Activated CD4-positive, alpha-beta memory T cell treated with anti-CD3 and anti-CD28 coated beads for 36 hours (primary cell): ENCODE measurements at regions of chr4 and their contacts with region 1.

Region 1: GRCh38 chr4:98601708-98602107 is 56.7 kb downstream of the TSPAN5 start:
- DNase-seq: peak; percentile 54
- H3K4me3 Mint-ChIP-seq: peak overlapping the region; percentile 54
- H3K27ac Mint-ChIP-seq: peak overlapping the region; percentile 82
- H3K4me1 Mint-ChIP-seq: peaks cover 55% of the 10 kb centered on the region
- H3K27me3 Mint-ChIP-seq: no peaks in the 10 kb centered on the region

Region 2: DNA sequence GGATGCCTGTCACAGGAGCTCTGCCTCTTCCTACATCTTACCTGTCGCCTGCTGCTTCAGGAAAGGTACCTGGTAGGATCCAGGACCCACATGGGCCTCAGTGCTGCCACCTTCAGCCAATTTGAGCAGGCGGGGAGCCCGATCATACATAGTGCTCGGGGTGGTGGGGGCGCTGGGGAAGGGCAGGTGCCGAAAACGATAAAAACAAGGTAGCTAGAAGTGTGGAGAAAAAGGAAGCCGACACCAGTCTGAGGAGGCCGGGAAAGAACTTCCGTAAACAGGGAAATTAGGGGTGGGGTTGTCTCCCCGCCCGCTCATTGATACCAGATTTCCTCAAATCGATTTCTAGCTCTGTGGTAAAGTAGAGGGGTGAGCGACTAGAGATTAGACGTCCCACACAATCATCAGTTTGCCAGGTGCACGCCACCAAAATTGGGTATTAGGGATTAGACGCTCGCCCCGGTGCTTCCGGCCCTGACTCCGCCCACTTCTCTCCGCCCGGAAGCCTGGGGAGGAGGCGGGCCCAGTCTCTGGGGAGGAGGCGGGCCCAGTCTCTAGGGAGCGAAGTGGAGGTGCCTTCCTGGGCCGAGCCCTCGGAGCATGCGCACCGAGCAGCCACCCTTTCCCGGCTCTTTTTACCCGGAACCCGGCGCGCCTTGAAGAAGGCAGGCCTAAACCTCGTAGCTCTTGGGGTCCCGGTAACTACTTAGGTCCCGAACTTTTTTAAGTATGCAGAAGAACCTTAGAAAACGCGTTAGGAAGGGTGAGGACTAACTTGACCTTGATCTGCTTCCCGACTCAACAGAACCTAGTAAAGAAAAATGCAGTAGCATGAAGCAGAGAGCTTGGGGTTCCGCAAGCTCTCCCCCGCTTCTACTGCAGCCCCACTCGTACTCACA is 458.5 kb before region 1 on chr4 and contains the start of gene STPG2:
- CTCF ChIA-PET with region 1: no interaction called
- POLR2A ChIA-PET with region 1: no interaction called
- intact Hi-C with region 1: loop called (anchors 10 kb)
- DNase-seq: peak; percentile 95
- H3K4me3 Mint-ChIP-seq: peak within 1 kb of the TSS; percentile 95
- H3K27ac Mint-ChIP-seq: peak within 1 kb of the TSS; percentile 98
- H3K4me1 Mint-ChIP-seq: peaks cover 20% of the 10 kb centered on the region
- H3K27me3 Mint-ChIP-seq: no peaks in the 10 kb centered on the region
- total RNA-seq, gene STPG2: not detected

Region 3: GRCh38 chr4:98510757-98511517 is 90.8 kb before region 1 on chr4:
- CTCF ChIA-PET with region 1: no interaction called
- POLR2A ChIA-PET with region 1: no interaction called
- intact Hi-C with region 1: loop called (anchors 1 kb)
- DNase-seq: peak; percentile 69
- H3K4me3 Mint-ChIP-seq: no peak overlapping the region
- H3K27ac Mint-ChIP-seq: peak overlapping the region; percentile 24
- H3K4me1 Mint-ChIP-seq: peaks cover 55% of the 10 kb centered on the region
- H3K27me3 Mint-ChIP-seq: no peaks in the 10 kb centered on the region

Region 4: GRCh38 chr4:98620087-98620784 is 18.5 kb after region 1 on chr4:
- CTCF ChIA-PET with region 1: interaction called, 3 read pairs
- POLR2A ChIA-PET with region 1: no interaction called
- intact Hi-C with region 1: loop called (anchors 2 kb)
- DNase-seq: no peak
- H3K4me3 Mint-ChIP-seq: no peak overlapping the region
- H3K27ac Mint-ChIP-seq: no peak overlapping the region
- H3K4me1 Mint-ChIP-seq: peaks cover 24% of the 10 kb centered on the region
- H3K27me3 Mint-ChIP-seq: no peaks in the 10 kb centered on the region

Region 5: DNA sequence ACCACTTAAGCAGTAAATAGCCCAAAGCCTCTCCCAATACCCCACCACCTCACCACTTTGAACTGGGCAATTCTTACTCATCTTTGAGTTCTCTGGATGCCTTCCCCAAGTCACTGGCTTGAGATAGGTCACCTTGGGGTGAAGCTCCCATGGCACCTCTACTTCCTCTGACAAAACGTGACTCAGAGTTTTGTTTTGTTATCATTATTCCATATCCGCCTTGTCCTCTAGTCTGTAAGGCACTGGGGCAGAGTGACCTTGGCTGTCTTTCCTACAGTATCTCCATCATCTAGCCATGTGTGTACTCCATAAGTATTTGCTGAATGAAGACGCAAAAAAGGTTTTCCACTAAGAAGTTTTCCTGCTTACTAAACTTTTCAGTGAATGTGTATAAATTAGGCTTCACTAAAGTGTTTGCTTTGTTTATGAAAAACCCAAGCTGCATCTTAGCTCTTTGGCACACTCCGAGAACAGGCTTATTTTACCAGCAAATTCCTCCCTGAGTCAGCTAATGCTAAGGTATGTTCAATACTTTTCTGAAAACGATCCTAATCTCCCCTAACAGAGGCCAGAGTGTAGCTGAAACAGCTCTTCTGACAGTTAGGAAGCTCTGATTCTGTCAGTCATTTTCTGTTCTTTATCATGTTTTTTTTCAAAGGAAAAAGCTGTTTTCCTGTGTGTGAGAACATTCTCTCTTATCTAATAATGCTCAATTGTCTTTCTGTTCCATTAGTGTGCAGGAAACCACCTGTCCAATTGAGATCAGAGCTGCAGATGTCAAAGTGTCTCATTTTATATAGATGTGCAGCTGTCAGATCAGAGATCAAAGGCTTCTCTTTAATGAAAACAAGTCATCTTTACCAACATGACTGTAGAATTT is 86.9 kb after region 1 on chr4:
- CTCF ChIA-PET with region 1: interaction called, 4 read pairs
- POLR2A ChIA-PET with region 1: interaction called, 6 read pairs
- intact Hi-C with region 1: loop called (anchors 1 kb)
- DNase-seq: peak; percentile 63
- H3K4me3 Mint-ChIP-seq: no peak overlapping the region
- H3K27ac Mint-ChIP-seq: peak overlapping the region; percentile 72
- H3K4me1 Mint-ChIP-seq: peaks cover 45% of the 10 kb centered on the region
- H3K27me3 Mint-ChIP-seq: no peaks in the 10 kb centered on the region

Region 6: DNA sequence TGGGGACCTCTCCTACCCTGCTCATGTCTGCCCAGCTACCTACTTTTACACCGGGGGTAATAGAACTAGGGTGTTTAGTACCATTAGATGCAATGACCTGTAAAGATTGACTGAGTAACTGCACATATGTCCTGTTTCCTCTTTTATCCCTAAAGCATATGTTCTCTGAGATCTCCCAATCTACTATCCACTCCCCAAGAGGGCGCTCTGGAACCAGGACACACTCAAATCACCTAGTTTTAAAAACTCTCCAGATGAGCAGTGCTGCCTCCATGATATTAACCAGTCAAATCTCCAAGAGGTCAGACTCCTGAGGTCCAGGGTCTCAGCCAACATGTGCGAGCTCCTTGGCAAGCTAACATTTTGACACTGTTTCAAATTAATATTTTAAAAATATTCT is 143.7 kb after region 1 on chr4:
- CTCF ChIA-PET with region 1: no interaction called
- POLR2A ChIA-PET with region 1: no interaction called
- intact Hi-C with region 1: no loop called
- DNase-seq: peak; percentile 18
- H3K4me3 Mint-ChIP-seq: no peak overlapping the region
- H3K27ac Mint-ChIP-seq: no peak overlapping the region
- H3K4me1 Mint-ChIP-seq: no peaks in the 10 kb centered on the region
- H3K27me3 Mint-ChIP-seq: no peaks in the 10 kb centered on the region

Region 7: GRCh38 chr4:98794565-98795205 is 193.0 kb after region 1 on chr4:
- CTCF ChIA-PET with region 1: no interaction called
- POLR2A ChIA-PET with region 1: no interaction called
- intact Hi-C with region 1: loop called (anchors 2 kb)
- DNase-seq: peak; percentile 73
- H3K4me3 Mint-ChIP-seq: no peak overlapping the region
- H3K27ac Mint-ChIP-seq: no peak overlapping the region
- H3K4me1 Mint-ChIP-seq: peaks cover 18% of the 10 kb centered on the region
- H3K27me3 Mint-ChIP-seq: no peaks in the 10 kb centered on the region

Region 8: GRCh38 chr4:99855678-99856077 is 1254.0 kb after region 1 on chr4:
- CTCF ChIA-PET with region 1: no interaction called
- POLR2A ChIA-PET with region 1: no interaction called
- intact Hi-C with region 1: loop called (anchors 5 kb)
- DNase-seq: peak; percentile 37
- H3K4me3 Mint-ChIP-seq: no peak overlapping the region
- H3K27ac Mint-ChIP-seq: peak overlapping the region; percentile 7
- H3K4me1 Mint-ChIP-seq: peaks cover 70% of the 10 kb centered on the region
- H3K27me3 Mint-ChIP-seq: no peaks in the 10 kb centered on the region